BJ (cell line): ENCODE measurements at regions of chr18 and their contacts with region 1.

Region 1: GRCh38 chr18:45690975-45691815 is 32.8 kb upstream of the SLC14A1 start:
- DNase-seq: no peak
- H3K4me3 ChIP-seq: no peak overlapping the region
- H3K27me3 ChIP-seq: no peaks in the 10 kb centered on the region
- CTCF ChIP-seq: peak; percentile 85

Region 2: GRCh38 chr18:45702866-45703265 is 11.7 kb after region 1 on chr18:
- CTCF ChIA-PET with region 1: interaction called, 14 read pairs
- POLR2A ChIA-PET with region 1: no interaction called
- DNase-seq: no peak
- H3K4me3 ChIP-seq: no peak overlapping the region
- H3K27me3 ChIP-seq: no peaks in the 10 kb centered on the region
- CTCF ChIP-seq: no peak